HCT116 (cell line): ENCODE measurements at regions of chr2 and their contacts with region 1.

Region 1: GRCh38 chr2:172813314-172813888 is 77.8 kb downstream of the RAPGEF4 start:
- DNase-seq: no peak
- ATAC-seq: peak; percentile 84
- H3K4me3 ChIP-seq: no peak overlapping the region
- H3K27ac ChIP-seq: no peak overlapping the region
- H3K4me1 ChIP-seq: no peaks in the 10 kb centered on the region
- H3K27me3 ChIP-seq: 0 out of 2 replicates have a peak, but pooled peaks cover 6% of the 10 kb centered on the region
- CTCF ChIP-seq: peak; percentile 38 to 55 (median 51); a peak in 5 of 6 replicates
- POLR2A ChIP-seq: no peak
- RAD21 ChIP-seq: peak; percentile 70

Region 2: DNA sequence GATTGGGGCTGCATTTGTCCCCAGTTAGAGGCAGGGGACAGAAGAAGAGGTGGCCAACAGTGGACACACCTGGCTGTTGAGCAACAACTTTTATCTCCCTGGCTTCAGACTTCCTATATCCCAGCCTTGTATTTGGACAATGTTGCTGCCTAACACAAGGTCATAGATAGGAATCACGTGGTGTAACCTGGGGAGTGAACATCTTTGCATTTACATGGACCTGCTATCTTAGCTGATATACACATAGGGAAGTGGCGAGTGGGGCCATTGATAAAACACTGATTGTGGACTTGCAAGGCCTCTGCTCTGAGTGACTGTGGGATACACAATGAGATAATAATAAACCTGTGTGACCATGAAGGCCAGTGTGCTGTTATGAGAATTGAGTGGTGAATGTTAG is 50.8 kb before region 1 on chr2:
- CTCF ChIA-PET with region 1: no interaction called
- POLR2A ChIA-PET with region 1: no interaction called
- RAD21 ChIA-PET with region 1: no interaction called
- intact Hi-C with region 1: no loop called
- DNase-seq: no peak
- ATAC-seq: no peak
- H3K4me3 ChIP-seq: no peak overlapping the region
- H3K27ac ChIP-seq: no peak overlapping the region
- H3K4me1 ChIP-seq: no peaks in the 10 kb centered on the region
- H3K27me3 ChIP-seq: no peaks in the 10 kb centered on the region
- CTCF ChIP-seq: no peak
- POLR2A ChIP-seq: no peak
- RAD21 ChIP-seq: no peak

Region 3: GRCh38 chr2:172931918-172932520 is 118.6 kb after region 1 on chr2:
- CTCF ChIA-PET with region 1: interaction called, 56 read pairs
- POLR2A ChIA-PET with region 1: no interaction called
- RAD21 ChIA-PET with region 1: interaction called, 3 to 8 read pairs
- intact Hi-C with region 1: no loop called
- DNase-seq: peak; percentile 52
- ATAC-seq: peak; percentile 82
- H3K4me3 ChIP-seq: no peak overlapping the region
- H3K27ac ChIP-seq: no peak overlapping the region
- H3K4me1 ChIP-seq: peaks cover 2 to 6% of the 10 kb centered on the region in 2 experiments; a peak in 3 of 4 replicates
- H3K27me3 ChIP-seq: no peaks in the 10 kb centered on the region
- CTCF ChIP-seq: peak; percentile 68 to 73 (median 72); a peak in 5 of 6 replicates
- POLR2A ChIP-seq: no peak
- RAD21 ChIP-seq: peak; percentile 68

Region 4: DNA sequence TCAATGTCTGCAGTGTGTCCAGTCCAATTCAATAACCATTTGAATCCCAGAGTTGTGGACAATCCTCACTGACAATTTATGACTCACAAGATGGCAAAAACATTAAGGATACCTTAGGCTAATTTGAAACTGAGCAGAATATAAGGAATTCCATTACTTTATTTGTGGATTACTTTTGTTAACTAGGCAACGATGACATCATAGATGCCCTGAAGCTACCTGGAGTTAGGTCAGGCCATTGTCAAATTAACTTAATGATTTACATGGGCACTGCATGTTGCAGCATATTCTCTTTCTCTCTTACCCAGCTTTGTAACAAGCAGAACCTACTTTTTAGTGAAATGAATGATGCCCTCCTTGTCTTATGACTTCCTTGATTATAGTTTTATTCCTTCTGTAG is 441.3 kb after region 1 on chr2:
- CTCF ChIA-PET with region 1: no interaction called
- POLR2A ChIA-PET with region 1: no interaction called
- RAD21 ChIA-PET with region 1: no interaction called
- intact Hi-C with region 1: no loop called
- DNase-seq: no peak
- ATAC-seq: no peak
- H3K4me3 ChIP-seq: no peak overlapping the region
- H3K27ac ChIP-seq: no peak overlapping the region
- H3K4me1 ChIP-seq: no peaks in the 10 kb centered on the region
- H3K27me3 ChIP-seq: no peaks in the 10 kb centered on the region
- CTCF ChIP-seq: no peak
- POLR2A ChIP-seq: no peak
- RAD21 ChIP-seq: no peak